Brain microvascular endothelial cell (primary cell): ENCODE measurements at regions of chr2 and their contacts with region 1.

Region 1: GRCh38 chr2:120703330-120703994 is 32.2 kb upstream of the GLI2 start:
- DNase-seq: peak; percentile 75
- H3K4me3 ChIP-seq: no peak overlapping the region
- H3K27ac ChIP-seq: no peak overlapping the region
- H3K27me3 ChIP-seq: no peaks in the 10 kb centered on the region
- CTCF ChIP-seq: no peak

Region 2: DNA sequence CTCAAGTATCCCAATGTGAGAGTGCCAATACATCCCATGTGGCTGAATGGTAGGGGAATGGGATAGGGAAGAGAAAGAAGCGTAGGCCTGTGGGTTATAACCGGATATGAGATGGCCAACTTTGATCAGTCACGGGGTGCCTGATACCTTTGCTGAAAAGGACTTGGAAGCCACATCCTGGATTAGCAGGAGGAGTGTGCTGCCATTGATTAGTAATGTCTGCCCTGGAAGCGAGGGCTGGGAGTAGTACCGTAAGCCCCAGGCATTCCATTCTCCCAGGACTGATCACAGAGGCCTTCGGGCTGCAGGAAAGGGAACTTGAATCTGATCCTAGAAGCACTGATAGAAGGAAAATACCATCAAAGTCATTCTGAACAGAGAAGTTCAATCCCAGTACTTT is 363.1 kb after region 1 on chr2:
- in situ Hi-C with region 1: loop called (anchors 10 kb)
- DNase-seq: no peak
- H3K4me3 ChIP-seq: no peak overlapping the region
- H3K27ac ChIP-seq: no peak overlapping the region
- H3K27me3 ChIP-seq: peaks cover 6% of the 10 kb centered on the region
- CTCF ChIP-seq: no peak